Right lobe of liver (tissue), 6 donors: ENCODE measurements at regions of chr3 and their contacts with region 1.

Region 1: GRCh38 chr3:196081791-196082618 is at the start of gene TFRC:
- DNase-seq: peak; percentile 97
- ATAC-seq: peak; percentile 90 to 96 (median 92)
- H3K4me3 ChIP-seq: peak within 1 kb of the TSS; percentile 87 to 99 (median 97)
- H3K27ac ChIP-seq: peak within 1 kb of the TSS; percentile 96 to 98 (median 97)
- H3K4me1 ChIP-seq: peaks cover 0 to 20% (median 4%) of the 10 kb centered on the region in 4 donors
- H3K27me3 ChIP-seq: no peaks in the 10 kb centered on the region
- CTCF ChIP-seq: no peak
- POLR2A ChIP-seq: peak; percentile 99
- total RNA-seq, gene TFRC: 20.5 to 132 (median 70.7) TPM

Region 2: GRCh38 chr3:195921334-195921791 is 160.6 kb before region 1 on chr3:
- intact Hi-C with region 1: no loop called
- DNase-seq: peak in 1 of 3 donors; percentile 16
- ATAC-seq: no peak
- H3K4me3 ChIP-seq: no peak overlapping the region
- H3K27ac ChIP-seq: no peak overlapping the region
- H3K4me1 ChIP-seq: no peaks in the 10 kb centered on the region
- H3K27me3 ChIP-seq: no peaks in the 10 kb centered on the region
- CTCF ChIP-seq: no peak
- POLR2A ChIP-seq: no peak

Region 3: DNA sequence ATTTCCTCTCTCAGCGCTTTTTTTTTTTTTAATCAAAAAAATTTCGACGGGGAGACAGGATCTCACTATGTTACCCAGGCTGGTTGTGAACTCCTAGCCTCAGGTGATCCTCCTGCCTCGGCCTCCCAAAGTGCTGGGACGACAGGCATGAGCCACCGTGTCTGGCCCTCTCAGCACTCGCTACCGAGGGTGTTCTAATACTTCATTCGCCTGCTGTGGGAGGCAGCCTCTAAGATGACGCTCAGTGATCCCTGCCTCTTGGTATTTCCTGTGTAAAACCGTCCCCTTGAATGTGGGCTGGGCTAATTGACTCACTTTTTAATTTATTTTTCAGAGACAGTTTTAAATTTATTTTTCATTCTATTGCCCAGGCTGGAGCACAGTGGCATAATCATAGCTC is 62.7 kb after region 1 on chr3:
- intact Hi-C with region 1: loop called in 1 of 2 experiments (anchors 10 kb)
- DNase-seq: no peak
- ATAC-seq: no peak
- H3K4me3 ChIP-seq: no peak overlapping the region
- H3K27ac ChIP-seq: no peak overlapping the region
- H3K4me1 ChIP-seq: peaks cover 0 to 13% (median 6%) of the 10 kb centered on the region in 4 donors
- H3K27me3 ChIP-seq: no peaks in the 10 kb centered on the region
- CTCF ChIP-seq: no peak
- POLR2A ChIP-seq: no peak